Aorta (tissue), 5 donors: ENCODE measurements at regions of chr2 and their contacts with region 1.

Region 1: GRCh38 chr2:18520451-18521425 is 39.7 kb downstream of the RDH14 start:
- DNase-seq: peak; percentile 87 to 97
- ATAC-seq: peak; percentile 92
- H3K4me3 ChIP-seq: no peak overlapping the region
- H3K27ac ChIP-seq: peak overlapping the region; percentile 17 to 46
- H3K4me1 ChIP-seq: peaks cover 2 to 6% of the 10 kb centered on the region in 2 donors
- H3K27me3 ChIP-seq: no peaks in the 10 kb centered on the region

Region 2: GRCh38 chr2:18435421-18436037 is 85.2 kb before region 1 on chr2:
- intact Hi-C with region 1: loop called in 1 of 2 experiments (anchors 5 kb)
- DNase-seq: no peak
- ATAC-seq: peak; percentile 72
- H3K4me3 ChIP-seq: no peak overlapping the region
- H3K27ac ChIP-seq: no peak overlapping the region
- H3K4me1 ChIP-seq: peaks cover 0 to 2% of the 10 kb centered on the region in 2 donors
- H3K27me3 ChIP-seq: no peaks in the 10 kb centered on the region

Region 3: DNA sequence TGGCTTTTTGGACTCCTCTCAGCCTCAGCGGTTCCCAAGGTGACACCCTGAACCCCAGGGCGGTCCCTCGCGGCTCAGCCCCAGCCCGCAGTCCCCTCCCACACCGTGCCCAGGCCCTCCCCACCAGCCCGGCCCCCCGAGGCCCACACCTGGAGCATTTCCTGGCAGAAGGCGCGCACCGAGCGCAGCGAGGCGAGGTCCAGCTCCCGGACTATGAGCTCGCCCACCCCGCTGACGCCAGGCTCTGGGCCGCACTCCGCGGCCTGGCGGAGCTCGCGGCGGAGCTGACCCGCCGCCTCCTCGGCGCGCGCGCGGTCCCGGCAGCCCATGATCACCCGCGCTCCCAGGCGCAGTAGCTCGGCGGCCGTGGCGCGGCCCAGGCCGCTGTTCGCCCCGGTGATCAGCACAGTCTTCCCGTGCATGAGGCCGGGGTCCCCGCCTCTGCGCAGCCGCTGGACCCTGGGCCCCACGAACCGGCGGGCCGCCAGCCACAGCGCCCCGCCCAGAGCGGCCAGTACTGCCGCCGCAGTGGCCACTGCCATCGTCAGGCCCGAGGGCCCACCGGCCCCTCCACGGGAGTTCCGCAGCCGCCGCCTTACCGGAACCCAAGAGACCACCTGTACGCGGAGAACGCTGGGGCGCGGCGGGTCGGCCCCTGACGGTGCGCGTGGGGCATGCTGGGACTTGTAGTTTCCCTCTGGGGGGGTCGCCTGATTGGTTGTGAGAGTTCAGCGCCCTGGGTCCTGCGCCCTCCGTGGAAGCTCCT is 39.5 kb after region 1 on chr2 and contains the start of gene RDH14:
- intact Hi-C with region 1: loop called in 1 of 2 experiments (anchors 5 kb)
- DNase-seq: peak; percentile 96 to 97
- ATAC-seq: peak; percentile 98
- H3K4me3 ChIP-seq: peak within 1 kb of the TSS; percentile 85 to 87
- H3K27ac ChIP-seq: peak within 1 kb of the TSS; percentile 45 to 70
- H3K4me1 ChIP-seq: peaks cover 3 to 7% of the 10 kb centered on the region in 2 donors
- H3K27me3 ChIP-seq: no peaks in the 10 kb centered on the region
- total RNA-seq, gene RDH14: 23.8 to 24.1 TPM

Region 4: DNA sequence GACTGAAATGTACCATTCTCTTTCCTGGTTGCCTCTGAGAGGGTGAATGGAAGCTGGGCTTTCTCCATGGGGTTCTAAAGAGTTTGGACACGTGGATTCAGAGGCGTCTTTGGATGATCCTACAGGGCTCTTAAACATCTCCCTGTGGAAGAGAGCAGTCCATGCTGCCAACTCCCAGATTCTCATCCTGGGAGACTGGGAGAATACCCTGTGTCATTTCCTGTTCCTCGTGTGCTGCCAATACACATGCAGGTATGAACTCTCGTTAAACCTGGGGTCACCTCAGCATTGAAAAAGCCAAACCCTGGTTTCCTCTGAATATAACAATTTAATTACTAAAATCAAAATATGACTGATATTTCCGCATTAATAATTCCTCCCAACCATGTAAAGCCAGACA is 142.0 kb after region 1 on chr2:
- intact Hi-C with region 1: no loop called
- DNase-seq: no peak
- ATAC-seq: no peak
- H3K4me3 ChIP-seq: no peak overlapping the region
- H3K27ac ChIP-seq: no peak overlapping the region
- H3K4me1 ChIP-seq: no peaks in the 10 kb centered on the region
- H3K27me3 ChIP-seq: no peaks in the 10 kb centered on the region

Region 5: GRCh38 chr2:18987592-18988073 is 466.9 kb after region 1 on chr2:
- intact Hi-C with region 1: loop called in 1 of 2 experiments (anchors 10 kb)
- DNase-seq: peak; percentile 81 to 88
- ATAC-seq: peak; percentile 59
- H3K4me3 ChIP-seq: no peak overlapping the region
- H3K27ac ChIP-seq: no peak overlapping the region
- H3K4me1 ChIP-seq: peaks cover 2 to 3% of the 10 kb centered on the region in 2 donors
- H3K27me3 ChIP-seq: no peaks in the 10 kb centered on the region

Region 6: GRCh38 chr2:19863303-19864041 is 1342.7 kb after region 1 on chr2:
- intact Hi-C with region 1: loop called (anchors 5 to 10 kb)
- DNase-seq: peak; percentile 79 to 93
- ATAC-seq: peak; percentile 89
- H3K4me3 ChIP-seq: no peak overlapping the region
- H3K27ac ChIP-seq: peak overlapping the region in 1 of 2 donors; percentile 9
- H3K4me1 ChIP-seq: no peaks in the 10 kb centered on the region
- H3K27me3 ChIP-seq: no peaks in the 10 kb centered on the region